ENCODE measurements at regions of chr11 and their contacts with region 1.

Region 1: GRCh38 chr11:44565211-44565952 is at the start of gene CD82:
- DNase-seq: peak; percentile 78
- ATAC-seq: peak; percentile 96
- H3K4me3 ChIP-seq: peak within 1 kb of the TSS; percentile 29 to 72 (median 55)
- H3K27ac ChIP-seq: no peak within 1 kb of the TSS
- H3K4me1 ChIP-seq: peaks cover 8% of the 10 kb centered on the region
- H3K27me3 ChIP-seq: peaks cover 0 to 15% of the 10 kb centered on the region in 2 experiments; a peak in 2 of 5 replicates
- CTCF ChIP-seq: peak; percentile 17; the same call in 1 of the 2 replicates
- EP300 ChIP-seq: no peak
- POLR2A ChIP-seq: no peak
- RAD21 ChIP-seq: no peak
- total RNA-seq, gene CD82: not detected in 2 replicates

Region 2: DNA sequence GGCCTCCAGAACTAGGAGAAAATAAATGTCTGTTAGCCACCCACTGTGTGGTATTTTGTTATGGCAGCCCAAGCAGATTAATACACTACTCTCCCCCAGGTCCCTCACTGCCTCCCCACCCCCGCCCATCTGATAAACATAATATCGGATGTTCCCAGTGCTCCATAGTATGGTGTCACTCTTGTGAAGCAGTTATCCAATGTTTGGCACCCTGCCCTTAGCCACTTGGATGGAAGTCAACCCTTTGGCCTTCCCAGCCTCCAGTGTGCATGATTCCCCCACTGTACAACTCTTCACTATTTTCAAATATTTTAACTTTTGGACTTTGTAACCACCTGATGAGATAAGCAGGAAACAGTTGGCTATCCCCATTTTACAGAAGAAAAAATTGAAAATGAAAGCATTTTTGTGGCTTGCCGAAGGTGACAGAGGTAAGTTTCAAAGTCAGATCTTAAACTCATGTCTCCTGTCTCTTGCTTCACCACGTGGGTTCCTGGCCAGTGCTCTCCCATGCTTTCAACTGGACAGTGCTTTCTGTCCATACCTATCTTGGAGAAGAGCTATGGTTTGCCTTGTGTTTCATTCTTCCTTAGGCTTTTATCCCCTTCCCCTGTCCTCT is 308.6 kb before region 1 on chr11:
- CTCF ChIA-PET with region 1: no interaction called
- POLR2A ChIA-PET with region 1: no interaction called
- in situ Hi-C with region 1: no loop called
- intact Hi-C with region 1: no loop called
- DNase-seq: peak; percentile 22
- ATAC-seq: peak; percentile 15; the same call in 1 of the 3 replicates
- H3K4me3 ChIP-seq: no peak overlapping the region
- H3K27ac ChIP-seq: no peak overlapping the region
- H3K4me1 ChIP-seq: peaks cover 41% of the 10 kb centered on the region
- H3K27me3 ChIP-seq: no peaks in the 10 kb centered on the region; a peak in 1 of 5 replicates
- CTCF ChIP-seq: no peak
- EP300 ChIP-seq: no peak
- POLR2A ChIP-seq: no peak
- RAD21 ChIP-seq: no peak

Region 3: DNA sequence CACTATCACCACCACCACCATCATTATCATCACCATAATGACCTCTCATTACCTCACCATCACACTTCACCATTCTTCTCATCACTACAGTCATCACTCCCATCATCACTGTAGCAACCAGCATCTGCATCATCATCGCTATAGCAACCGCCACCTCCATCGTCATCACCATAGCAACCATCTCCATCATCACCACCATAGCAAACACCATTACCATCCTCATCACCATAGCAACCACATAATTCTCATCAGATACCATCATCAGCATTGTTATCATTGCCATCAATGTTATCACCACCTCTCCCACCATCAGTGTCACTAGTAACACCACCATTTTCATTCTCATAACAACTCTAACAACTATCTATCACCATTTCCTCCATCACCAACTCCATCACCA is 23.0 kb before region 1 on chr11:
- CTCF ChIA-PET with region 1: no interaction called
- POLR2A ChIA-PET with region 1: no interaction called
- in situ Hi-C with region 1: no loop called
- intact Hi-C with region 1: no loop called
- DNase-seq: no peak
- ATAC-seq: no peak
- H3K4me3 ChIP-seq: no peak overlapping the region
- H3K27ac ChIP-seq: no peak overlapping the region
- H3K4me1 ChIP-seq: no peaks in the 10 kb centered on the region
- H3K27me3 ChIP-seq: peaks cover 0 to 1% of the 10 kb centered on the region in 2 experiments; a peak in 2 of 5 replicates
- CTCF ChIP-seq: no peak
- EP300 ChIP-seq: no peak
- POLR2A ChIP-seq: no peak
- RAD21 ChIP-seq: no peak

Region 4: DNA sequence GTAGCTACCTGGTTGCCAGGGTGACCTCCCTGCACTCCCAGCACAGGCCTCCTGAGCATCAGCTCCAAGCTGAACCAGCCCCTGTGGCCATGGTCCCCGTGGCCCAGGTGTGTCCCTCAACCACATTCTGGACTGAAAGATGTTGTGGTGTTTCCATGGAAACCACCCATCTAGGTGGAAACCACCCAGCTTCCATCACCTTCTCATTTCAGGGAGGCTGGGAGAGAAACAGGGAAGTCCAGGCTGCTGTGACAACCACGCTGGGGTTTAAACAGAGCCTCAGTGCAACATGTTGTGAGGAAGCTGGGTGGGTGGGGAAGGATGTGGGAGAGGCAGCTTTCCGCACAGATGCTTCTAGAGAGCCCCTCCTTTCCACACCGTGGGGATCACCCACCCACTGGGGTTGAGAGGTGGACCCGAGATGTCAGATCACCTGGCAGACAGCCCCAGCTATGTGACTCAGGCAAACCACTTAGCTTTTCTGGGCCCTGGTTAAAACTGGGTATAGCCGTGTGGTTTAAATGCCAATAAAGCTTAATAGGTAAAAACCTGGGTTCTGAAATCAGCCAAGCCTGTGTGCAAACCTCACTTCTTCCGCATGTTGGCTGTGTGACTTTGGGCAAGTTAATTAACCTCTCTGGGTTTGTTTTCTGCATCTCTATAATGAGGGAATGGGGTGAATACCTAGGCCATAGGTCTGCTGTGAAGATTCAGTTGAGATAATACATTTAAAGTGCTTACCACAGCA is 46.5 kb after region 1 on chr11:
- CTCF ChIA-PET with region 1: no interaction called
- POLR2A ChIA-PET with region 1: no interaction called
- in situ Hi-C with region 1: loop called (anchors 10 kb)
- intact Hi-C with region 1: no loop called
- DNase-seq: no peak
- ATAC-seq: no peak
- H3K4me3 ChIP-seq: no peak overlapping the region
- H3K27ac ChIP-seq: no peak overlapping the region
- H3K4me1 ChIP-seq: no peaks in the 10 kb centered on the region
- H3K27me3 ChIP-seq: no peaks in the 10 kb centered on the region; a peak in 1 of 5 replicates
- CTCF ChIP-seq: no peak
- EP300 ChIP-seq: no peak
- POLR2A ChIP-seq: no peak
- RAD21 ChIP-seq: no peak

Measured in HepG2 (cell line).